GM23248 (cell line): ENCODE measurements at regions of chr18 and their contacts with region 1.

Region 1: GRCh38 chr18:59067873-59068272 is 71.8 kb upstream of the SEC11C start:
- DNase-seq: peak; percentile 38
- H3K4me3 ChIP-seq: no peak overlapping the region
- H3K27ac ChIP-seq: no peak overlapping the region
- H3K4me1 ChIP-seq: peaks cover 3% of the 10 kb centered on the region; the same call in 1 of the 2 replicates
- H3K27me3 ChIP-seq: no peaks in the 10 kb centered on the region

Region 2: GRCh38 chr18:58529714-58530354 is 538.0 kb before region 1 on chr18:
- in situ Hi-C with region 1: loop called (anchors 10 kb)
- DNase-seq: peak; percentile 72
- H3K4me3 ChIP-seq: no peak overlapping the region
- H3K27ac ChIP-seq: no peak overlapping the region
- H3K4me1 ChIP-seq: peaks cover 10% of the 10 kb centered on the region
- H3K27me3 ChIP-seq: no peaks in the 10 kb centered on the region

Region 3: GRCh38 chr18:59233017-59233410 is 165.1 kb after region 1 on chr18:
- in situ Hi-C with region 1: no loop called
- DNase-seq: peak; percentile 81
- H3K4me3 ChIP-seq: no peak overlapping the region
- H3K27ac ChIP-seq: no peak overlapping the region; the same call in 1 of the 2 replicates
- H3K4me1 ChIP-seq: peaks cover 24% of the 10 kb centered on the region
- H3K27me3 ChIP-seq: no peaks in the 10 kb centered on the region; the same call in 1 of the 2 replicates